Body of pancreas (tissue), 4 donors: ENCODE measurements at regions of chrX and their contacts with region 1.

Region 1: GRCh38 chrX:57929373-57929772 is 19.1 kb upstream of the ZXDA start:
- DNase-seq: no peak
- ATAC-seq: peak; percentile 27
- H3K4me3 ChIP-seq: no peak overlapping the region
- H3K27ac ChIP-seq: no peak overlapping the region
- H3K4me1 ChIP-seq: no peaks in the 10 kb centered on the region
- H3K27me3 ChIP-seq: no peaks in the 10 kb centered on the region
- CTCF ChIP-seq: peak in 6 of 7 experiments; percentile 33 to 62 (median 42)
- POLR2A ChIP-seq: no peak

Region 2: DNA sequence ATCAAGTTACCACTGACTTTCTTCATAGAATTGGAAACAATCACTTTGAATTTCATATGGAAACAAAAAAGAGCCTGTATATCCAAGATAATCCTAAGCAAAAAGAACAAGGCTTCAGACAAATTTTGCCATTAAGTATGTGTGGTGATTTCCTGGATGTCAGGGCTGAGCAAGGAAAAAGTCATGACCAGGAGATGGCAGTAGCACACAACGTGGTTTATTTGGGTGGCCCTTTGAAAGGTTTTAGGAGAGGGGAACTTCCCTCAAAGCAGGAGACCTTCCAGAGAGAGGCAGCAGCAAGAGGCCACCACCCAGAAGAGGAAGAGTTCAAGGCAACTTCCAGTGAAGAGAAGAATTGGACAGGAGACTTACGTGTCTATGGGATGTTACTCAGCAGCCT is 355.6 kb before region 1 on chrX:
- intact Hi-C with region 1: loop called (anchors 10 kb)
- DNase-seq: peak in 3 of 4 donors; percentile 3 to 12 (median 11)
- ATAC-seq: no peak
- H3K4me3 ChIP-seq: no peak overlapping the region
- H3K27ac ChIP-seq: no peak overlapping the region
- H3K4me1 ChIP-seq: no peaks in the 10 kb centered on the region
- H3K27me3 ChIP-seq: no peaks in the 10 kb centered on the region
- CTCF ChIP-seq: peak in 5 of 7 experiments; percentile 31 to 47 (median 33)
- POLR2A ChIP-seq: no peak